ENCODE measurements at regions of chr6 and their contacts with region 1.

Region 1: DNA sequence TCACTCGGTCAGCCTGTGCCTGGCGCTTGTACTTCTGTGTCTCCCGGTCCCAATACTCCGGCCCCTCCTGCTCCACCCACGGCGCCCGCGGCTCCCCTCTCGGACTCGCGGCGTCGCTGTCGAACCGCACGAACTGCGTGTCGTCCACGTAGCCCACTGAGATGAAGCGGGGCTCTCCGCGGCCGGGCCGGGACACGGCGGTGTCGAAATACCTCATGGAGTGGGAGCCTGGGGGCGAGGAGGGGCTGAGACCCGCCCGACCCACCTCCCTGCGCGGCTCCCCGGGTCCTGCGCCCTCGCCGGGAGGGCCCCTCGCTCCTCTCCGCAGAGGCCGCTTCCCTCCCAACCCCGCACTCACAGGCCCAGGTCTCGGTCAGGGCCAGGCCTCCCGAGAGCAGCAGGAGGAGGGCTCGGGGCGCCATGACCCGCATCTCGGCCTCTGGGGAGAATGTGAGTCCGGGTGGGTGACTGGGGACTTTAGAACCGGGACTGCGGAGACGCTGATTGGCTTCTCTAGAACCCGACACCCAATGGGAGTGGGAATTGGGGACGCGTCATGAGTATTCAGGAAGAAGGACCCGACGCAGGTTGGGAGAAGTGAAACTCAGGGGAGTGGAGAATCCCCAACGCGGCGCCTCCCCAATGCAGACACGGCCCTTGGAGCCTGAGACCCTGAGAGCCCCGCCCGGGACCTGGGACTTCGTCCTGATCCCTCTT is at the start of gene HLA-C:
- DNase-seq: peak; percentile 79 to 98 (median 92)
- ATAC-seq: peak; percentile 85
- H3K4me3 ChIP-seq: peak within 1 kb of the TSS; percentile 82 to 86
- H3K4me3 Mint-ChIP-seq: peak within 1 kb of the TSS; percentile 95
- H3K27ac ChIP-seq: peak within 1 kb of the TSS; percentile 93 to 98
- H3K27ac Mint-ChIP-seq: peak within 1 kb of the TSS; percentile 100
- H3K4me1 ChIP-seq: peaks cover 43% of the 10 kb centered on the region
- H3K4me1 Mint-ChIP-seq: peaks cover 56% of the 10 kb centered on the region
- H3K27me3 ChIP-seq: no peaks in the 10 kb centered on the region
- H3K27me3 Mint-ChIP-seq: no peaks in the 10 kb centered on the region
- CTCF ChIP-seq: no peak
- total RNA-seq, gene HLA-C: 2,677 to 2,722 TPM

Region 2: DNA sequence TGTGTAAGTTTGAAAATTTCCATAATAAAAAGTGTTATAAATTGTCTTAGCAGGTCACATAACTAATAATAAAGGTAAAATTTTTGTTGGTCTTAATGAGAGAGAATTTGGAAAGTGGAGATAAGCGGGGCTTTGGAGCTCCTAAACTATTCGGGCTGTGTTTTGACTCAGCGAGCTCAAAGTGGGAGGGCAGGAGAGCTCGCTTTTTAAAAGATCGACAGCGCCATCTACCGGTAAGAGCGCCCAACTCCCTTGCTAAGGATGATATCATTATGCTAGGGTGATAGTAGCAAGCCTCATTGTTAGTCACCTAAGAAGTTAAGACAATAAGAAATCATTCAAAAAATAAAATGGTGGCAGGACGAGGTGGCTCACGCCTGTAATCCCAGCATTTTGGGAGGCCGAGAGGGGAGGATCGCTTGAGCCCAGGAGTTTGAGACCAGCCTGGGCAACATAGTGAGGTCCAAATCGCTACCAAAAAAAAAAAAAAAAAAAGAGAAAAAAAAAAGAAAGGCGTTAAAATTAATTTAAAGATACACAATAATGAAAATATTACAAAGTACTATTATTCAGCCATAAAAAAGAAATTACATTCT is 184.2 kb before region 1 on chr6:
- CTCF ChIA-PET with region 1: no interaction called
- POLR2A ChIA-PET with region 1: no interaction called
- intact Hi-C with region 1: no loop called
- DNase-seq: peak; percentile 80 to 93 (median 88)
- ATAC-seq: peak; percentile 98
- H3K4me3 ChIP-seq: no peak overlapping the region
- H3K4me3 Mint-ChIP-seq: no peak overlapping the region
- H3K27ac ChIP-seq: no peak overlapping the region
- H3K27ac Mint-ChIP-seq: no peak overlapping the region
- H3K4me1 ChIP-seq: no peaks in the 10 kb centered on the region
- H3K4me1 Mint-ChIP-seq: peaks cover 8% of the 10 kb centered on the region
- H3K27me3 ChIP-seq: no peaks in the 10 kb centered on the region
- H3K27me3 Mint-ChIP-seq: no peaks in the 10 kb centered on the region
- CTCF ChIP-seq: peak; percentile 63

Region 3: DNA sequence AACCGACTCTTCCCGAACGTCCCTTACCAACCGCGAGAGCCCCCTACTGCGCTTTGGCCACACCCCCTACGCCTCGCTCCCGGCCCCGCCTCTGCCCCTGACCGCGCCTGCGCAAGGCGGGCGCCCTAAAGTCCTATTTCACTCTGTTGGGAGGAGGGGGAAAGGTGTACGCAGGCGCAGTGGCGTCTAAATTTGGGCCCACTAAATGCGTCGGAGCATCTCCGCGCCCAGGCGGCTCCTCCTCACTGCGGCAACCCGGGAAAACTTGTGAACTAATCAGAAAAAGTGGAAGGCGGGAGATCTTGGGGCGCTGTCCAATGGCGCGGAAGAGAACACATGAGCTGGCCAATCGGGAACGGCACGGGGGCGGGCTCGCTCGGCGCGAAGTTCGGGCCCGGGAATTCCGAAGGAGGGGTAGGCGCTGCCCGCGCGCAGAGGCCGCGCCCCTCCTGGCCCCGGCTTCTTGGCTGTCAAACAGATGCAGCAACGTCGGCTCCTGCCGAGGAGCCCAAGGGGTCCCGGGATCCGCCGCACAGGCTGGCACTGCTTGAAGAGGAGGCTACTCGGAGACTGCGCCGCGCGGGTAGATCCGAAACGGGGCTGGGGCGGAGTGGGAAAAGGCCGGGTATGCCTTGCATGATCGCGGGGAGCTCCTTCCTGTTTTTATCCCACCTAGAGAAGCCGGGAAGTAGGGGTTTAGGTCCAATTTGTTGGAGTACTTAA is 113.5 kb before region 1 on chr6 and contains the start of gene TCF19:
- CTCF ChIA-PET with region 1: no interaction called
- POLR2A ChIA-PET with region 1: no interaction called
- intact Hi-C with region 1: loop called (anchors 1 kb)
- DNase-seq: peak; percentile 98 to 100 (median 99)
- ATAC-seq: peak; percentile 89
- H3K4me3 ChIP-seq: peak within 1 kb of the TSS; percentile 52 to 89
- H3K4me3 Mint-ChIP-seq: peak within 1 kb of the TSS; percentile 86
- H3K27ac ChIP-seq: peak within 1 kb of the TSS; percentile 40 to 82
- H3K27ac Mint-ChIP-seq: peak within 1 kb of the TSS; percentile 85
- H3K4me1 ChIP-seq: peaks cover 12% of the 10 kb centered on the region
- H3K4me1 Mint-ChIP-seq: peaks cover 24% of the 10 kb centered on the region
- H3K27me3 ChIP-seq: no peaks in the 10 kb centered on the region
- H3K27me3 Mint-ChIP-seq: no peaks in the 10 kb centered on the region
- CTCF ChIP-seq: no peak
- total RNA-seq, gene TCF19: 2.6 to 2.9 TPM

Region 4: DNA sequence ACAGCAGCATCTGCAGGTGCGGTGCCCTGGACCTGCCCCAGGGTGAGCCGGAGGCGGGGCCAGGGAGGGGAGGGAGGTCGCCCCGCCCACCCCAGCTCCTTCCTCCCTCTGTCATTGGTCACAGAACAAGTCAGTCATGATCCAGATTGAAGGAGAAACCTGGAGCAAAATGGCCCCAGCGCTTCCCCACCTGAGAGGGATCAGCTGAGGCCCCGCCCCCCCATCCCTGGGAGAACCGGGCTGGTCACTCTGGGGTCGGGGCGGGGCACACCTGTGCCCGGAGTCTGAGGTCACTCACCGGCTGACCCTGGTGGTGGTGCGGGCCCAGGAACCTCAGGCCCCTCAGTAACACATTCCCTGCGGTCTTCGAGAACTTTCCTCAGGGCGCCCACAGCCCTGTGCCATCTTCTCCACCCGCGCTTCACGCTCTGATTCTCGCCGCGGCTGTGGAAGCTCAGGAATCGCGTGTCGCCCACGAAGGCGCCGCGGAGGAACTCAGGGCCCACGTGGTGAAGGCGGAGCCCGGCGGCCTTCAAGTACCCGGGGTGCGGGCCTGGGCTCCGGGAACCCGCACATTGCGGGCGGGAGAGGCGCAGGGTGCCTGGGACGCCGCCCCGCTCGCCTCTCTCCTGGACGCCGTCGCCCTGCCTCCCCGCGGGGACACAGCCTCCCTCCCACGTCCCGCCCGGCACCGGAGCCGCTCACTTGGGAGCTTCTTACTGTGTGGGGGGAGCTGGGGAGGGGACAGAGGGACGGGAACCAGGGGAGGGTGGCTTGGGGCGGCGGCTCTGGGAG is 36.4 kb after region 1 on chr6:
- CTCF ChIA-PET with region 1: no interaction called
- POLR2A ChIA-PET with region 1: interaction called, 10 read pairs
- intact Hi-C with region 1: loop called in 1 of 2 experiments (anchors 5 kb)
- DNase-seq: peak; percentile 48 to 86 (median 69)
- ATAC-seq: peak; percentile 95
- H3K4me3 ChIP-seq: peak overlapping the region; percentile 64 to 74
- H3K4me3 Mint-ChIP-seq: peak overlapping the region; percentile 85
- H3K27ac ChIP-seq: peak overlapping the region in 1 of 2 experiments; percentile 27
- H3K27ac Mint-ChIP-seq: peak overlapping the region; percentile 77
- H3K4me1 ChIP-seq: peaks cover 9% of the 10 kb centered on the region
- H3K4me1 Mint-ChIP-seq: peaks cover 7% of the 10 kb centered on the region
- H3K27me3 ChIP-seq: no peaks in the 10 kb centered on the region
- H3K27me3 Mint-ChIP-seq: no peaks in the 10 kb centered on the region
- CTCF ChIP-seq: no peak

Region 5: DNA sequence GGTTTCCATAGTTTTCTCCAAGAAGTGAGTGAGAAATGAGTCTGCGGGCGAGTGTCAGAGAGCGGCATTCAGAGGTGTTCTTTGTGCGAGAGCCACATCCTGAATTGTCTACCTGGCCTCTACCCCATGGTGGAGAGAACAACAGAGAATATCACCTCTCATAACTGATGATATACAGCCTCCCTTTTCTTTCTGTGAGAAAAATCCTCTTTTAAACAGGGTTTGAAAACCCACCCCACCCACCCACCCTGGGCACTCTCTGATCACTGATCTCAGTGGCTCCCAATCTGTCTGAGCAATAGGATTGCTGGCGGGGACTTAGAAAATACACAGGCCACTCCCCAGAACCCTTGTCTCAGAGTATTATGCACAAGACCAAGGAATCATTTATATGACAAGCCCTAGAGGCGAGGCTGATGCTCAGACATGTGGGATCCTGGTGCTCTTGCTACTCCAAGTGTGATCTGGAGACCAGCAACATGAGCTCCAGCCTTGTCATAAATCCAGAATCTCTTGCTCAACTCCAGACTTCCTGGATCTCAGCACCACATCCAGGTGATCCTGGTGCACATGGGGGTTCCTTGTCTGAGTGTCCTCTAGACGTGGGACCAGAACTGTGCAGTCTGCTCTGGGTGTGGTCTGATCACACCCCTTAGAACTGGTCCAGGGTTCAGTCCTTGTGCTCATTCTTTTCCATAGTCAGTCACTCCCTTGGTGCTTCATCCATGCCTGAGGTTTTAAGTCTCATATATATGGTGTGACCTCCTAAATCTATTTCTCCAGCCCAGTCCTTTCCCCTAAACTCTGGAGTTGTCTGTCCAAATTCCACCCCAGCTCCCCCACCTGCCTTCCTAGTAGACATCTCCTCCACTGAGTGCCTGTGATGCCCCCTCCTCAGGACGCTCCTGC is 79.9 kb after region 1 on chr6:
- CTCF ChIA-PET with region 1: no interaction called
- POLR2A ChIA-PET with region 1: interaction called, 37 read pairs
- intact Hi-C with region 1: loop called (anchors 1 kb)
- DNase-seq: peak in 5 of 9 experiments; percentile 33 to 84 (median 50)
- ATAC-seq: peak; percentile 44
- H3K4me3 ChIP-seq: no peak overlapping the region
- H3K4me3 Mint-ChIP-seq: peak overlapping the region; percentile 100
- H3K27ac ChIP-seq: peak overlapping the region; percentile 41 to 42
- H3K27ac Mint-ChIP-seq: peak overlapping the region; percentile 81
- H3K4me1 ChIP-seq: peaks cover 40% of the 10 kb centered on the region
- H3K4me1 Mint-ChIP-seq: peaks cover 56% of the 10 kb centered on the region
- H3K27me3 ChIP-seq: no peaks in the 10 kb centered on the region
- H3K27me3 Mint-ChIP-seq: no peaks in the 10 kb centered on the region
- CTCF ChIP-seq: no peak